Vagina (tissue), 2 donors: ENCODE measurements at regions of chr18 and their contacts with region 1.

Region 1: GRCh38 chr18:22999212-22999611 is 66.1 kb downstream of the RBBP8 start:
- DNase-seq: no peak
- H3K4me3 ChIP-seq: no peak overlapping the region
- H3K27ac ChIP-seq: no peak overlapping the region
- H3K4me1 ChIP-seq: no peaks in the 10 kb centered on the region
- H3K27me3 ChIP-seq: no peaks in the 10 kb centered on the region
- CTCF ChIP-seq: no peak
- POLR2A ChIP-seq: no peak

Region 2: DNA sequence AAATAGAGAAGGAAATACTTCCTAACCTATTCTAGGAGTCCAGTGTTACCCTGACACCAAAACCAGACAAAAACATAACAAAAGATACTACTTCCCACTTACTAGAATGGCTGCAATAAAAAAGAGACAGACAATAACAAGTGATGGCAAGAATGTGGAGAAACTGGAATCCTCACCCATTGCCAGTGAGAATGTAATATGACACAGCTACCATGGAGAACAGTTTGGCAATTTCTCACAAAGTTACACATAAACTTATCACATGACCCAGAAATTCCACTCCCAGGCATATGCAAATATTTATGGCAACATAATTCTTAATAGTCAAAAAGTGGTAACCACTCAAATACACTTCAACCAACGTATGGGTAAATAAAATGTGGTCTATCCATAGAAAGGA is 371.7 kb before region 1 on chr18:
- intact Hi-C with region 1: no loop called
- DNase-seq: no peak
- H3K4me3 ChIP-seq: no peak overlapping the region
- H3K27ac ChIP-seq: no peak overlapping the region
- H3K4me1 ChIP-seq: no peaks in the 10 kb centered on the region
- H3K27me3 ChIP-seq: no peaks in the 10 kb centered on the region
- CTCF ChIP-seq: no peak
- POLR2A ChIP-seq: no peak

Region 3: DNA sequence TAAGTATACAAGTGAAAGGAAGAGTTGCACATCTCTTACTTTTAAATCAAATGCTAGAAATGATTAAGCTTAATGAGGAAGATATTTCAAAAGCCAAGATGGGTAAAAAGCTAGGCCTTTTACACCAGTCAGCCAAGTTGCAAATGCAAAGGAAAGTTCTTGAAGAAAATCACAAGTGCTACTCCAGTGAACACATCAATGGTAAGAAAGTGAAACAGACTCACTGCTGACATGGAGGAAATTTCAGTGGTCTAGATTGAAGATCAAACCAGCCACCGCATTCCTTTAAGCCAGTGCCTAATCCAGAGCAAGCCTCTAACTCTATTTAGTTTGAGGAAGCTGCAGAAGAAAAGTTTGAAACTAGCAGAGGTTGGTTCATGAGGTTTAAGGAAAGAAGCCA is 13.0 kb after region 1 on chr18:
- intact Hi-C with region 1: loop called (anchors 1 kb)
- DNase-seq: no peak
- H3K4me3 ChIP-seq: no peak overlapping the region
- H3K27ac ChIP-seq: no peak overlapping the region
- H3K4me1 ChIP-seq: no peaks in the 10 kb centered on the region
- H3K27me3 ChIP-seq: no peaks in the 10 kb centered on the region
- CTCF ChIP-seq: no peak
- POLR2A ChIP-seq: no peak

Region 4: DNA sequence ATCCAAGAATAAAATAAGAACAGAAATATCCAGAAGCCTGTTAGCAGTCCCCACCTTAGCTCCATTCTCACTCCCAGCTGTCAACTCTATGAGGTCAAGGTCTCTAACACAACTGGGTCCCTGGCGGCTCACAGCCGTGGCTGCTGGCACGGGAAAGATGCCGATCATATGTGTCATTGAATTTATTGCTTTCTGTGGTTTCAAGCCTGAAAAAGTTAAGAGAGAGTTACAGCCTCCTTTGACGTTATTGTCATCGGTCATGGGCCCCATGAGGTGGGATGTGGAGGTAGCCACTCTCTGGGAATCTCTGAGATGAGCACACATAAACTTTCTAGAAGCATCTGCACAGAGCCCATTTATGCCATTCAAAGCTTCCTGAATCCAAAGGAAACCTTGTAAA is 107.4 kb after region 1 on chr18:
- intact Hi-C with region 1: no loop called
- DNase-seq: no peak
- H3K4me3 ChIP-seq: no peak overlapping the region
- H3K27ac ChIP-seq: peak overlapping the region; percentile 4
- H3K4me1 ChIP-seq: peaks cover 26% of the 10 kb centered on the region
- H3K27me3 ChIP-seq: no peaks in the 10 kb centered on the region
- CTCF ChIP-seq: no peak
- POLR2A ChIP-seq: no peak

Region 5: GRCh38 chr18:23945416-23946079 is 946.3 kb after region 1 on chr18:
- intact Hi-C with region 1: no loop called
- DNase-seq: no peak
- H3K4me3 ChIP-seq: no peak overlapping the region
- H3K27ac ChIP-seq: no peak overlapping the region
- H3K4me1 ChIP-seq: no peaks in the 10 kb centered on the region
- H3K27me3 ChIP-seq: no peaks in the 10 kb centered on the region
- CTCF ChIP-seq: no peak
- POLR2A ChIP-seq: no peak